MCF 10A (cell line): ENCODE measurements at regions of chr16 and their contacts with region 1.

Region 1: GRCh38 chr16:56519459-56520250 is at the start of gene BBS2:
- DNase-seq: peak; percentile 83
- H3K4me3 Mint-ChIP-seq: peak within 1 kb of the TSS; percentile 81
- H3K27ac Mint-ChIP-seq: peak within 1 kb of the TSS; percentile 83
- H3K4me1 Mint-ChIP-seq: peaks cover 29% of the 10 kb centered on the region
- H3K27me3 Mint-ChIP-seq: no peaks in the 10 kb centered on the region
- CTCF ChIP-seq: no peak
- total RNA-seq, gene BBS2: 23.9 and 25.8 TPM in 2 replicates

Region 2: DNA sequence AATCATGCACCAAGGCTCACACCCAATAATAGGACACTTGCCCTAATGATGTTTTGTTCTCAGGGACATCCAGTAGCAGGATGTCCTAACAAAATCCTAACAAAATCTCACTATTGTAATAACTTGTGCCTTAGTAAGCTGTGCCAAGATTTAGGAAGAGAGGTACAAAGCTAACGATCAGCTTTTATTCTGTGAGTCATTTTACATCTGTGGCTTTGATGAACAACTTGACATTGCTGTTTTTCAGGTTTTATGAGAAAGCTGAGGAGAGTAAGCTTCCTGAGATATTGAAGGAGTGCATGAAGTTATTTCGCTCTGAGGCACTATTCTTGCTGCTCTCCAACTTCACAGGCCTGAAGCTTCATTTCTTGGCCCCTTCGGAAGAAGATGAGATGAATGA is 49.4 kb before region 1 on chr16:
- CTCF ChIA-PET with region 1: no interaction called
- POLR2A ChIA-PET with region 1: no interaction called
- intact Hi-C with region 1: no loop called
- DNase-seq: no peak
- H3K4me3 Mint-ChIP-seq: no peak overlapping the region
- H3K27ac Mint-ChIP-seq: peak overlapping the region; percentile 70
- H3K4me1 Mint-ChIP-seq: peaks cover 3% of the 10 kb centered on the region
- H3K27me3 Mint-ChIP-seq: no peaks in the 10 kb centered on the region
- CTCF ChIP-seq: no peak

Region 3: DNA sequence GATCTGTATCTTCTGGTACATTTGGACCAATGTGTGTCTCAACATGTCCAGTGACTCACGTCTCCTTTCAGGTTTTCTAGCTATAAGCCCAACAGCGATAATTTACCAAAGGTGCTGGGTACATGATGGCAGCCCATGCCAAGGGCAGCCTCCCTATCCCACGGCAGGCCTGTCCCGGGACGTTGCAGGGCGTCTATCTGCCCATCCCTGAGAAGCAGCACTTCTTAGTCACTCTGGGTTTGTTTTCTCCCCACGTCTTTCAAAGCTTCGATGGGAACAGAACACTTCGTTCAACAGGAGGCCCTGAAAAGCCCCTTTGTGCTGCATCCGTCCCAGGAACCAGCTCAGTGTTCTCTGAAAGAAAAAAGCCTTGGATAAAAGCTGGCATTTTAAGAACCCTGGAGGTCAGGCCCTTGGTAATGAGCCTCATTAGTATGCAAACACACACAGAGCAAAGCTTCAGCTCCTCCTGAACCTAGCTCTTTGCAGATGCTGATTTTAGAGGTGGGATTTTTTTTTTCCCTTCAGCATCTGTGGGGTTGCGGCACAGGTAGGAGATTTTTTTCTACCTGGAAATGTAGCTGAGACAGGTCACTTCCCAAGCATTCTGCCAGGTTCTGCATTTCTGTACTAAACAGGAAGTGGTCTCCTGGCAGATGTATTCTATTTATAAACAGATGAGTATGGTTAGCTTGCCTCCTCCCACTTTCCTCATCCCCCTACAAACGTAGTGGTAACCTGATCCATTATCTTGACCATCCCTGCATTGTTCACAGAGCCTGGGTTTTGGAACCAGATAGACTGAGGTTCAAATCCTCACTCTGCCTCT is 27.7 kb after region 1 on chr16:
- CTCF ChIA-PET with region 1: interaction called, 10 read pairs
- POLR2A ChIA-PET with region 1: interaction called, 40 read pairs
- intact Hi-C with region 1: no loop called
- DNase-seq: peak; percentile 60
- H3K4me3 Mint-ChIP-seq: no peak overlapping the region
- H3K27ac Mint-ChIP-seq: no peak overlapping the region
- H3K4me1 Mint-ChIP-seq: peaks cover 20% of the 10 kb centered on the region
- H3K27me3 Mint-ChIP-seq: no peaks in the 10 kb centered on the region
- CTCF ChIP-seq: no peak